ENCODE measurements at regions of chr14 and their contacts with region 1.

Region 1: GRCh38 chr14:101843665-101844064 is 82.2 kb downstream of the PPP2R5C start:
- DNase-seq: peak; percentile 65
- CTCF ChIP-seq: peak; percentile 60

Region 2: GRCh38 chr14:101739446-101740141 is 104.1 kb before region 1 on chr14:
- CTCF ChIA-PET with region 1: no interaction called
- POLR2A ChIA-PET with region 1: no interaction called
- DNase-seq: no peak
- CTCF ChIP-seq: no peak

Region 3: GRCh38 chr14:101823511-101824120 is 20.0 kb before region 1 on chr14:
- CTCF ChIA-PET with region 1: interaction called, 13 read pairs
- POLR2A ChIA-PET with region 1: no interaction called
- DNase-seq: peak; percentile 41
- CTCF ChIP-seq: no peak

Region 4: DNA sequence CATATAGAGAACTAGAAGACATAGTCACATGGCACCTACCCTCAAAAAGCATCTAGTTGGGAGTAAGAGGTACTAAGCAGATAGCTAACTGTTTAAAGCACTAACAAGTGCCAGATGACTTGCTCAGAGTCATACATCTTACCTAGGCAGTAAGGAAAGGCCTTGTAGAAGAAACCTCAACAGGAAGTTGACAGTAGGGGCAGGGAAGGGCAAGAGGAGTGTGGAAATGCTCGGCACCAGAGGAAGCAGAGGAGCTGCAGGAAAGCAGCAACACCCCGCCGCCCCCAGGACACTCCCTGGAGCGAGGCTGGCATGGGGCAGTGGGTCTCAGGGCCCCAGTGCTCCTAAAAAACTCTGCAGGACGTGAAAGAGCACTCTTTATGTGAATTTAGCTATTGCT is 10.7 kb after region 1 on chr14:
- CTCF ChIA-PET with region 1: interaction called, 14 read pairs
- POLR2A ChIA-PET with region 1: no interaction called
- DNase-seq: no peak
- CTCF ChIP-seq: no peak

Region 5: GRCh38 chr14:101865288-101865687 is 21.6 kb after region 1 on chr14:
- CTCF ChIA-PET with region 1: interaction called, 19 read pairs
- POLR2A ChIA-PET with region 1: no interaction called
- DNase-seq: no peak
- CTCF ChIP-seq: no peak

Region 6: DNA sequence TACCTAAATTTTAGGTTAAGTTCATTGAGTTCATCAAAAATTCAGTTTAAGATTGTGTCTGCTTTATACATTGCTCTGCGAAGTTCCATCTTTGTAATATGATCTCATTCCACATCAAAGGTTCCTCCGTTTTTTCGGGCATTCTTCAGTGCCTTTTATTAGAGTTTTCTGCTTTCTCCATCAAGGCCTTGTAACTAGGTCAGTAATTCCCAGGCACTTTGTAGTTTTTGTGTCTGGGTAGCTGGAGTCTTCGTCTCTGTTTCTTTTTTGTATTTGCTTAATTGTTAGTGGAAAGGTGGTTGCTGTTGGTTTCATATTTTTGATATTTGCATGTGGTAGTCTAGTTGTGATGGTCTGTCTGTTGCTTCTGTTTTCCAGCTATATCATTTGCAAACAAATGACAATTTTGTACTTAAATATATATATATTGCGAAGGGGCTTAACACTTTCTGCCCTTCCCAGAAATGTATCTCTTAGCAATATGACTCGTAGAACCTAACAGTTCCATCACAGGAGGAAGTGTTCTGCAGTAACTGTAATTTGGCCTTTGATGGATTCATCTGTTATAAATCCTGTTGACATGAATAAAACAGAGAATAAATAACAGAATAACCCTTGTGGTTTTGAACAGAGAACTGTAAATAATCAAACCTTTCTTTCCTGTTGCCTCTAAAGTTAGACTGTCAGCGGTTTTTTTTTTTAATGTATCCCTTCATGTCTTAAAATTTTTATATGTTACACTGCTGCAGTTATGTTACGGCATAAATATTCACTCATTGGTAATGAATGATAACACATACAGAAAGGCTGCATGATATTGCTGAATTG is 32.3 kb after region 1 on chr14:
- CTCF ChIA-PET with region 1: interaction called, 13 read pairs
- POLR2A ChIA-PET with region 1: interaction called, 3 read pairs
- DNase-seq: no peak
- CTCF ChIP-seq: no peak